WTC11 (cell line): ENCODE measurements at regions of chr5 and their contacts with region 1.

Region 1: GRCh38 chr5:36744773-36745589 is 131.6 kb upstream of the NIPBL start:
- DNase-seq: peak; percentile 95
- ATAC-seq: peak; percentile 84
- H3K4me3 Mint-ChIP-seq: peak overlapping the region; percentile 95
- H3K27ac Mint-ChIP-seq: peak overlapping the region; percentile 100
- H3K4me1 Mint-ChIP-seq: peaks cover 32% of the 10 kb centered on the region
- H3K27me3 Mint-ChIP-seq: peaks cover 9% of the 10 kb centered on the region
- CTCF ChIP-seq: 0 out of 2 replicates have a peak, but pooled peaks have one; percentile 6

Region 2: DNA sequence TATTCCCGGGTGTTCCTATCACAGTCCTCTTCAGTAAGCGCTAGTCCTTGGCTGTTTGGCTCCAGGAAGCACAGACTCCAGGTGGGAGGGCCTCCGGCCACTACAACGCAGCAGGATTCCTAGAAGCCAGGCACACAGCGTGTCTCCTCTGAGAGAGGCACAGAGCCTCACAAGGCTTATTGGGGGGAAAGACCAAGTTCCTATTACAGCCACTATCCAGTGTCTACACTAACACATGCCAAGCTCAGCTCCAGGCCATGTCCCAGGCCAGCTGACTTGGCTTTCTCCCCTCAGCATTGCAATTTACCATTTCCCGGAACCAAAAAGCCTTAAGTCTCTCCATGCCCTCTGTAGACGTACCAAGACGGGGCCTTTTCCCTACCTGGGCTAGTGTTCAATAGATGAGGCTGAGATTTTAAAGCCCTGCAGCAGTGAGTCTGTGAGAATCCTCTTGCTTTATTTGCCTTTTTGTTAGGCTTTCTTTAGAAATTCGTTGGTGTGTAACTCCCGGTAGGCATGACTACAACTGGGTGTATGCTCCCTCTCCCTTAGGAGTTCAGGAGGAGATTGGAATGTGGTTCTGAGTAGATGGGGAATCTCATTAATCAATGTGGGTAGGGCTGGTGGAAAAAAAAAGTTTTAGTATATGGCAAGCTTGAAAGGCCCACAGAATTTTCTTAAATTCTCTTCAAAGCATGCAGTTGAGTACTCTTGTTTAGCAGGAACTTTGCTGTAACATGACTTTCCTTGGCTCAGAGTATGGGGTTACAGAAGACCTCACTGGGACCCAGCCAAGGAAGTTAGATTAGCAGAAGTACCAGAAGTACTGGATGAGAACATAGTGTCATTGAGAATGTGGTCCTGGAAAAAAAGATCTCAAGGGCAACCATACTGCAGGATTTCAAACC is 222.9 kb before region 1 on chr5:
- CTCF ChIA-PET with region 1: no interaction called
- POLR2A ChIA-PET with region 1: no interaction called
- DNase-seq: no peak
- ATAC-seq: peak; percentile 80
- H3K4me3 Mint-ChIP-seq: no peak overlapping the region
- H3K27ac Mint-ChIP-seq: no peak overlapping the region
- H3K4me1 Mint-ChIP-seq: peaks cover 8% of the 10 kb centered on the region
- H3K27me3 Mint-ChIP-seq: no peaks in the 10 kb centered on the region; the same call in 1 of the 2 replicates
- CTCF ChIP-seq: no peak

Region 3: GRCh38 chr5:36777105-36777757 is 32.2 kb after region 1 on chr5:
- CTCF ChIA-PET with region 1: interaction called, 18 read pairs
- POLR2A ChIA-PET with region 1: no interaction called
- DNase-seq: peak; percentile 46
- ATAC-seq: peak; percentile 98
- H3K4me3 Mint-ChIP-seq: no peak overlapping the region
- H3K27ac Mint-ChIP-seq: no peak overlapping the region; the same call in 1 of the 2 replicates
- H3K4me1 Mint-ChIP-seq: no peaks in the 10 kb centered on the region; the same call in 1 of the 2 replicates
- H3K27me3 Mint-ChIP-seq: no peaks in the 10 kb centered on the region
- CTCF ChIP-seq: peak; percentile 21; the same call in 1 of the 2 replicates

Region 4: DNA sequence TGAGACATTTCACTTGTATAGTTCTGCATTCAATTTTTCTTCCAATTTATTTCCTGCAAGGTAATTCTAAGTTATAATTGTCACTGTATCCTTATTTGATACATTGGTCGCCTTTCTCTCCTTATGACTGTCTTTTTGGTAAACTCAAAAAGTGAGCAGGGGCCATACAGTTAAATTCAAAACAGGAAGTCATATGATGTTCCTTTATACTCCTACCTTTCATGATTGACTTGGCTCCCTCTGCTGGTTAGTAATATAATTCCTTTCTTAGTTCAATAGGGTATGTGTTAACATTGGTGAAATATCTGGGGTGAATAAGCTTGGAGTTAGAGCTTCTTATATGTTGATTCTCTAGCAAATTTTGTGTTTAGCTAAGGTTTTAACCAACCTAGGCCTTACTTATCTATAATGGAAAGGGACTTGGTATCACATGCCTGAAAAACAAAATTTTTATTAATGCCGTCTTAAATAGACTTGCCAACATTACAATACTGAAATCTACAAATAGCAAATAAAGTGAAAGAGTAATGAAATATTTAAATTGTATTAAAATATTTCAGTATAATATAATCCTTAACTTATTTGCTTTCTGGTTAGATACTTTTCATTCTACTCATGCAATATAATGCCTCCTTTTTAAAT is 125.5 kb after region 1 on chr5:
- CTCF ChIA-PET with region 1: interaction called, 23 read pairs
- POLR2A ChIA-PET with region 1: interaction called, 4 read pairs
- DNase-seq: no peak
- ATAC-seq: peak; percentile 82
- H3K4me3 Mint-ChIP-seq: no peak overlapping the region
- H3K27ac Mint-ChIP-seq: no peak overlapping the region
- H3K4me1 Mint-ChIP-seq: peaks cover 14% of the 10 kb centered on the region
- H3K27me3 Mint-ChIP-seq: no peaks in the 10 kb centered on the region
- CTCF ChIP-seq: peak; percentile 54

Region 5: GRCh38 chr5:36875790-36876388 is 130.9 kb after region 1 on chr5:
- CTCF ChIA-PET with region 1: interaction called, 23 read pairs
- POLR2A ChIA-PET with region 1: interaction called, 5 read pairs
- DNase-seq: peak; percentile 67
- ATAC-seq: peak; percentile 34
- H3K4me3 Mint-ChIP-seq: peak overlapping the region; percentile 94
- H3K27ac Mint-ChIP-seq: peak overlapping the region; percentile 95
- H3K4me1 Mint-ChIP-seq: peaks cover 23% of the 10 kb centered on the region
- H3K27me3 Mint-ChIP-seq: no peaks in the 10 kb centered on the region
- CTCF ChIP-seq: no peak